Ovary (tissue), 10 donors: ENCODE measurements at regions of chr20 and their contacts with region 1.

Region 1: GRCh38 chr20:11274141-11274594 is 600.4 kb upstream of the JAG1 start:
- DNase-seq: peak in 1 of 5 donors; percentile 32
- H3K4me3 ChIP-seq: no peak overlapping the region
- H3K27ac ChIP-seq: no peak overlapping the region
- H3K4me1 ChIP-seq: no peaks in the 10 kb centered on the region
- H3K27me3 ChIP-seq: no peaks in the 10 kb centered on the region
- CTCF ChIP-seq: peak in 2 of 3 donors; percentile 37 to 45
- EP300 ChIP-seq: no peak
- POLR2A ChIP-seq: no peak

Region 2: GRCh38 chr20:10558635-10559187 is 715.5 kb before region 1 on chr20:
- intact Hi-C with region 1: loop called in 1 of 4 experiments (anchors 5 kb)
- DNase-seq: no peak
- H3K4me3 ChIP-seq: no peak overlapping the region
- H3K27ac ChIP-seq: no peak overlapping the region
- H3K4me1 ChIP-seq: peaks cover 3% of the 10 kb centered on the region
- H3K27me3 ChIP-seq: no peaks in the 10 kb centered on the region
- CTCF ChIP-seq: no peak
- EP300 ChIP-seq: no peak
- POLR2A ChIP-seq: no peak

Region 3: DNA sequence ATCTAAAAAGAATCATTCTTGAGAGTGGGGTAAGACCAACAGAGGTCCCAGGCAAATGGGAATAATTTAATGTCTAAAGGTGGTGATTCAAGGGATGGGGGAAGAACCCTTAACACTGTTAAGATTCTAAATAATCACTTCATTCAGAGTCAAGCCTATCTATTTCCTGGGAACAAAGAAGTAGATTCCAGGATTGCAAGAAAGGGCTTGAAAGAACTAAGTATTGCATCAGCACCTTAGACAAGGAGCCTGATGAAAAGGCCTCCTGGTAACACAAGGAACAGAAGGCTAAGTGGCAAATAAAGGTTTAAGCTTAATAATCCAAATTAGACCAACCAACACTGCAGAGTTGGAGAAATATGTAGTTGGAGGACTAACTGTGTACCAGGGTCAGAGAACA is 22.8 kb after region 1 on chr20:
- intact Hi-C with region 1: no loop called
- DNase-seq: no peak
- H3K4me3 ChIP-seq: no peak overlapping the region
- H3K27ac ChIP-seq: no peak overlapping the region
- H3K4me1 ChIP-seq: no peaks in the 10 kb centered on the region
- H3K27me3 ChIP-seq: no peaks in the 10 kb centered on the region
- CTCF ChIP-seq: no peak
- EP300 ChIP-seq: no peak
- POLR2A ChIP-seq: no peak

Region 4: GRCh38 chr20:11766976-11767375 is 492.8 kb after region 1 on chr20:
- intact Hi-C with region 1: no loop called
- DNase-seq: no peak
- H3K4me3 ChIP-seq: no peak overlapping the region
- H3K27ac ChIP-seq: no peak overlapping the region
- H3K4me1 ChIP-seq: no peaks in the 10 kb centered on the region
- H3K27me3 ChIP-seq: no peaks in the 10 kb centered on the region
- CTCF ChIP-seq: no peak
- EP300 ChIP-seq: no peak
- POLR2A ChIP-seq: no peak